K562 (cell line): ENCODE measurements at regions of chr7 and their contacts with region 1.

Region 1: GRCh38 chr7:22452142-22452959 is 47.6 kb downstream of the STEAP1B start:
- DNase-seq: peak; percentile 67 to 85 (median 76)
- ATAC-seq: peak; percentile 100
- H3K4me3 ChIP-seq: no peak overlapping the region
- H3K27ac ChIP-seq: no peak overlapping the region; the same call in 2 of the 3 replicates
- H3K4me1 ChIP-seq: peaks cover 0 to 2% of the 10 kb centered on the region in 2 experiments; a peak in 2 of 5 replicates
- H3K27me3 ChIP-seq: no peaks in the 10 kb centered on the region
- CTCF ChIP-seq: peak; percentile 81 to 94 (median 83)
- EP300 ChIP-seq: no peak
- POLR2A ChIP-seq: no peak
- RAD21 ChIP-seq: peak; percentile 65 to 87

Region 2: GRCh38 chr7:22295402-22296264 is 156.7 kb before region 1 on chr7:
- CTCF ChIA-PET with region 1: interaction called, 3 read pairs
- POLR2A ChIA-PET with region 1: no interaction called
- in situ Hi-C with region 1: no loop called
- intact Hi-C with region 1: loop called (anchors 2 kb)
- DNase-seq: no peak
- ATAC-seq: no peak
- H3K4me3 ChIP-seq: no peak overlapping the region
- H3K27ac ChIP-seq: no peak overlapping the region
- H3K4me1 ChIP-seq: no peaks in the 10 kb centered on the region
- H3K27me3 ChIP-seq: peaks cover 4 to 7% of the 10 kb centered on the region in 2 experiments; a peak in 3 of 5 replicates
- CTCF ChIP-seq: peak in 2 of 3 experiments; percentile 15 to 51; a peak in 2 of 6 replicates
- EP300 ChIP-seq: no peak
- POLR2A ChIP-seq: no peak
- RAD21 ChIP-seq: peak; percentile 47 to 68; a peak in 3 of 4 replicates

Region 3: DNA sequence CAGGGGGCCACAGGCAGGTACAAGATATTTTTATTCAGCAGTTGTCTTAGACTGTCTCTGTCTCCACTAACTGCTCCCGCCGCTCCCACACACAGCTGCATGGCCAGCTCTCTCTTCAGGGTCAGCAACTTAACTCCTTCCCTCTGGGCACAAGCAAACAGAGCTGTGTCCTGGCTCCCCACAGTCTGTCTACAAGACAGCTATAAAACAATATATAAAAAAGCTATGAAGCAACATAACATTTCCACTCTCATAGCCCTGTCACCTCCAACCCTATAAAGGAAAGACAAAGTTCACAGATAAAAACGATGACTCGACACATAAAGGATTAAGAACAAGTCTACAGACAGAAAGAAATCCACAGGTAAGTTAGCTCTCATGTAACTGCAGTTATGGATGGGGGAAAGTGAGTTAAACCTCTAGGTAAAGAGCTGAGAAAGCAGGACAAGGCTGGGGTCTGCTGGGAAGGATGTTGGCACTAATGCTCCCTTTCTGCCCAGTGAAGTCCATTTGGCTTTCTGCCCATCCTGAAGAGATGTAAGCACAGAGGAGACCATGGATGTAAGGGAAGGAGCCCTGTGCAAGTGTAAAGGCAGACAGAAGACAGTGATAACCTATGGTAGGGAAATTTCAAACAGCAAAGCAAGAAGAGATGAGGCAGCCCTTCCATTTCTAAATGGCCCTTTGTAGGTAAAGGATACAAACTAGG is 122.4 kb before region 1 on chr7:
- CTCF ChIA-PET with region 1: no interaction called
- POLR2A ChIA-PET with region 1: no interaction called
- in situ Hi-C with region 1: no loop called
- intact Hi-C with region 1: loop called (anchors 5 kb)
- DNase-seq: no peak
- ATAC-seq: peak; percentile 81
- H3K4me3 ChIP-seq: no peak overlapping the region
- H3K27ac ChIP-seq: no peak overlapping the region
- H3K4me1 ChIP-seq: peaks cover 6 to 10% of the 10 kb centered on the region in 2 experiments; a peak in 4 of 5 replicates
- H3K27me3 ChIP-seq: no peaks in the 10 kb centered on the region
- CTCF ChIP-seq: no peak
- EP300 ChIP-seq: no peak
- POLR2A ChIP-seq: no peak
- RAD21 ChIP-seq: no peak

Region 4: GRCh38 chr7:22393913-22394729 is 58.2 kb before region 1 on chr7:
- CTCF ChIA-PET with region 1: no interaction called
- POLR2A ChIA-PET with region 1: no interaction called
- in situ Hi-C with region 1: no loop called
- intact Hi-C with region 1: loop called (anchors 5 kb)
- DNase-seq: no peak
- ATAC-seq: peak; percentile 26; the same call in 1 of the 3 replicates
- H3K4me3 ChIP-seq: no peak overlapping the region
- H3K27ac ChIP-seq: no peak overlapping the region
- H3K4me1 ChIP-seq: peaks cover 0 to 18% of the 10 kb centered on the region in 2 experiments; a peak in 4 of 5 replicates
- H3K27me3 ChIP-seq: 0 out of 5 replicates have a peak, but pooled peaks cover 0 to 4% of the 10 kb centered on the region in 2 experiments
- CTCF ChIP-seq: no peak
- EP300 ChIP-seq: no peak
- POLR2A ChIP-seq: no peak
- RAD21 ChIP-seq: no peak